Posterior cingulate gyrus (tissue), 11 donors: ENCODE measurements at regions of chr2 and their contacts with region 1.

Region 1: GRCh38 chr2:74919827-74920226 is 38.6 kb upstream of the POLE4 start:
- DNase-seq: peak; percentile 26 to 95 (median 74)

Region 2: DNA sequence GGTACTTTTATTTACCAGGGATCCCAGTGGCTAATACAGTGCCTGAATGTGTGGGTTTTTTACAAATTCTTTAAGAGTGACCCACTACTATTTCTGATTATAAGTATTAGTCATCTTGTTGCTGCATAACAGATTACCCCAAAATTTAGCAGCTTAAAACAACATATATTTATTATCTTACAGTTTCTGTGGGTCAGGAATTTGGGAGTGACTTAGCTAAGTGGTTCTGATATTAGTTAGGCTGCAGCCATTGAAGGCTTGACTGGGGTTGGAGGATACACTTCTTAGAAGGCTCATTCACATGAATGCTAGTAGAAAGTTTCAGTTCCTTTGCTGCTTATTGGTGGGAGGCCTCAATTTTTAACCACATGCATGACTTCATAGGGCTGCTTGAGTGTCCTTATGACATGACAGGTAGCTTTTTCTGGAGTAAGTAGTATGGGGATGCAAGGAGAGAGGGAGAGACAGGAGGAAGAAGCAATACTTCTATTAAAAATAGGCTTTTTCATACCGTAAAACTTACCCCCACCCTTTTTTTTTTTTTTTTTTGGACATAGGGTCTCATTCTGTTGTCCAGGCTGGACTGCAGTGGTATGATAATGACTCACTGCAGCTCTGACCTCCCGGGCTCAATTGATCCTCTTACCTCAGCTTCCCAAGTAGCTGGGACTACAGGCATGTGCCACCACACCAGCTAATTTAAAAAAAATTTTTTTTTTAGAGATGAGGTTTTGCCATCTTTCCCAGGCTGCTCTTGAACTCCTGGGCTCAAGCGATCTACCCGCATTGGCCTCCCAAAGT is 25.4 kb after region 1 on chr2:
- intact Hi-C with region 1: no loop called
- DNase-seq: no peak

Region 3: GRCh38 chr2:75403991-75404428 is 484.2 kb after region 1 on chr2:
- intact Hi-C with region 1: loop called (anchors 2 kb)
- DNase-seq: no peak

Region 4: DNA sequence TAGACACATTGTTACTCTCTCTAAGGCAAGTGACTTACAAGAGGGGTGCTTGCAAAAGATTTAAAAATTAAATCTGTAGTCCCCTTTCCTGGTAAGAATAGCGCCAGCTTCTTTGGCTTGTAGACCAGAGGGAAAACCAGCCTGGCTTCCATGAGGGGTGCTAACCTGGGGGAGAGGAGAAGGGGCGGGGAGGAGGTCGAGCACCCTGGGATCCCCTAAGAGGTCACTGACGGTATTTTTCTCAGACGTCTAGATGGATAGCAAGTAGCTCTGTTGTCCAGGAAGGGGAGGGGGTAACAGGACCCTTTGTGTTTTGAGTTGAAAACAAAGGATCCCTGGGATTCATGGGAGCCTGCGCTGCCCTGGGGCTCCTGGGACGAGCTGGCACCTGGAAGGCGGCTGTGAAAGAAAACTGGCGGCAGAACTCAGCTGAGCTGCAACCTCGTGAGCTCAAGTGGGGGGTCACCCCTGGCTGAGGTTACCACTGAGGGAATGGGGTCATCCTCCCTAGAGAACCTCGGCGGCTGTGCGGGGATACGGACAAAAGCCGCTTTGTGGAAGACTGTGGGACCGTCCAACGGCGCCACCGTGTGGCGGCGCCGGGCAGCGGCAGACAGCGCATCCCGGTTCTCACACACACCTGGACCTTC is 689.0 kb after region 1 on chr2:
- intact Hi-C with region 1: loop called (anchors 10 kb)
- DNase-seq: peak; percentile 13 to 95 (median 64)

Region 5: GRCh38 chr2:75627895-75628504 is 708.2 kb after region 1 on chr2:
- intact Hi-C with region 1: loop called (anchors 5 kb)
- DNase-seq: peak; percentile 48 to 96 (median 79)